Endothelial cell of umbilical vein (primary cell): ENCODE measurements at regions of chr11 and their contacts with region 1.

Region 1: DNA sequence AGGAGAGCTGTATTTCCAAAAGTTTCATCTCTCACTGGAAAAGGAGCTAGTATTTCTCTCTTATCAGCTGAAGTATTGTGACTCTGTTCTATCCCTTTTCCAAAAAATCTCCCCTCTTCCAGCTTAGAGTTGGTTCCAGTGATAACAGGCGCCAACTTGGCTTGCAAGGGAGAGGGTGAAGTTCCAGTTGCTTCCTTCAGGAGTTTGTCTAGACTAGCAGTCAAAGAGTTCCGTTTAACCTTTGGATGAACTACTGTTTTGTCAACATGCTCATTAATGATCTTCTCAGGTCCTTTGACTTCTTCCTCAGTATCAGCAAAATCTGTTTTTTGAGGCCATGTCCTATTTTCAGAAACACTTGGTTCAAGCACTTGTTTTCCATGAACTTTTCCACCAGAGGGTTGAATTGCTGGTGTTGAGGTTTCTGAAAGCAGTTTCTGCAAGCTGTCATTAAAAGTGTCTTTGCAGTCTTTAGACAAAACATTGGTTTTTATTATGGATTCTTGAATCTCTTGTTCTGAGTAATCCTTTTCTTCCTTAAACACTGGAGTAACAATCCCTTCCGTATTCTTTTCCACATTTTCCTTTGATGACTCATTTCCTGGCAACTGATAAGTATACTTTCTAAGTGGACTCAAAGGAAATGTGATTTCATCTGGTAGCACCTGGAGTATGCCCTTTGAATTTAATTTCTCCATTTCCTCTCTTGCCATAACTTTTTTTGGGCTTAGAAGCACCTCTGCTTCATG is 39.7 kb upstream of the CCDC89 start:
- DNase-seq: peak; percentile 92
- H3K4me3 ChIP-seq: peak overlapping the region in 1 of 3 experiments; percentile 25
- H3K27ac ChIP-seq: peak overlapping the region; percentile 86
- H3K4me1 ChIP-seq: peaks cover 26% of the 10 kb centered on the region
- H3K27me3 ChIP-seq: no peaks in the 10 kb centered on the region
- CTCF ChIP-seq: no peak
- POLR2A ChIP-seq: no peak

Region 2: GRCh38 chr11:85699957-85700741 is 25.5 kb before region 1 on chr11:
- CTCF ChIA-PET with region 1: no interaction called
- POLR2A ChIA-PET with region 1: no interaction called
- dilution Hi-C with region 1: no loop called
- intact Hi-C with region 1: no loop called
- DNase-seq: no peak
- H3K4me3 ChIP-seq: no peak overlapping the region
- H3K27ac ChIP-seq: no peak overlapping the region
- H3K4me1 ChIP-seq: no peaks in the 10 kb centered on the region
- H3K27me3 ChIP-seq: no peaks in the 10 kb centered on the region
- CTCF ChIP-seq: no peak
- POLR2A ChIP-seq: no peak

Region 3: DNA sequence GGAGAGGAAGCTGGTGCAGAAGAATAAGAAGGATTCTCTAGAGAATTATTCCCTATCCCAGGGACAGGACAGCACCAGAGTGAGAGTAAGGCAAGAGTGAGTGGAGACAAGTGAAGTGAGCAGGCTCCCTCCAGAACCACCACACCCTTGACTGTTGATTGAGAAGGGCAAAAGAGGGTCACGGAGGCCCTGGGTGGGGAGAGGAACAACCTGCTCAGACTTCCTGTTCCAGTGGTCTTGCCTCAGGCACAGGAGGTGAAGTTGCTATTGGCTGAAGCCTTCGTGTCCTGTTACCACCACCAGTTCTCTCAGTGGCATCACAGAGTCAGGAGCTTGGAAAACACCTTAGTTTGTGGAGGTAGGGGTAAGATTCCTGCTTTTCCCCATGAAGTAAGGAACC is 12.1 kb after region 1 on chr11:
- CTCF ChIA-PET with region 1: interaction called, 11 read pairs
- POLR2A ChIA-PET with region 1: interaction called, 4 read pairs
- dilution Hi-C with region 1: no loop called
- intact Hi-C with region 1: loop called (anchors 1 kb)
- DNase-seq: no peak
- H3K4me3 ChIP-seq: no peak overlapping the region
- H3K27ac ChIP-seq: peak overlapping the region; percentile 27
- H3K4me1 ChIP-seq: peaks cover 33% of the 10 kb centered on the region
- H3K27me3 ChIP-seq: no peaks in the 10 kb centered on the region
- CTCF ChIP-seq: no peak
- POLR2A ChIP-seq: no peak

Region 4: GRCh38 chr11:85752890-85753581 is 27.4 kb after region 1 on chr11:
- CTCF ChIA-PET with region 1: no interaction called
- POLR2A ChIA-PET with region 1: no interaction called
- dilution Hi-C with region 1: no loop called
- intact Hi-C with region 1: loop called (anchors 2 kb)
- DNase-seq: peak; percentile 9
- H3K4me3 ChIP-seq: no peak overlapping the region
- H3K27ac ChIP-seq: no peak overlapping the region
- H3K4me1 ChIP-seq: peaks cover 5% of the 10 kb centered on the region
- H3K27me3 ChIP-seq: peaks cover 5 to 8% of the 10 kb centered on the region in 2 experiments
- CTCF ChIP-seq: no peak
- POLR2A ChIP-seq: no peak